HCT116 (cell line): ENCODE measurements at regions of chr16 and their contacts with region 1.

Region 1: GRCh38 chr16:15822957-15823356 is 33.9 kb downstream of the MYH11 start:
- DNase-seq: no peak
- ATAC-seq: no peak
- H3K4me3 ChIP-seq: no peak overlapping the region
- H3K27ac ChIP-seq: no peak overlapping the region
- H3K4me1 ChIP-seq: no peaks in the 10 kb centered on the region
- H3K27me3 ChIP-seq: no peaks in the 10 kb centered on the region
- CTCF ChIP-seq: no peak
- POLR2A ChIP-seq: no peak
- RAD21 ChIP-seq: no peak

Region 2: DNA sequence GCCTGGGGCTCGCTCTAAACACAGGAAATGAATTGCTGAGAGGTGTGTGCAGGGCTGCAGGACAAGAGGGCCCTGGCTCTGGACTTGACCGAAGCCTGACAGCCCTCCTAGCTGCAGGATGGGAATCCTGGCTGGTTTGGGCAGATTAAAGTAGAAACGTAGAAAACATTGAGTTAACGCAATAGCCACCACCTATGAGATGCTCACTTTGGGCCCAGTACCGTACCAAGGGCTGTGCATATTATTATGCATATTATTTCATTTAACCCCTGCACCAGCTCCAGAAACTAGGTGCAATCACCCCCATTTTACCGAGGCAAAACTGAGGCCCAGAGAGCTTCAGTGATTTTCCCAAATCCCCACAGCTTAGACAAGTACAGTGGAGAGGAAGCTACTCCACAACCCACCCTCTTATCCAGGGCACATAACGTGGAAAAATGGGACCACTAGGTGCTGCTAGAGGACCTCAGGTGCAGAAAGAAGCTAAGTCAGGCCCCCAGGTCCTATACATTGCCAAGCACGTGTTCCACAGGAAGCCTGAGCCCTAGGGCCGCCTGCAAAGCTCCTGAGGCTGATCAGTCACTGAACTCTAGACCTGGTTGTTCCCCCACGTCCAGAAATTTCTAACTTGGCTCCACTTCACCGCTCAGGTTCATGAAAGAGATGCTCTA is 45.3 kb before region 1 on chr16:
- CTCF ChIA-PET with region 1: interaction called, 38 read pairs
- POLR2A ChIA-PET with region 1: interaction called, 3 read pairs
- RAD21 ChIA-PET with region 1: interaction called in 1 of 2 experiments, 4 read pairs
- intact Hi-C with region 1: no loop called
- DNase-seq: peak; percentile 60
- ATAC-seq: peak; percentile 94
- H3K4me3 ChIP-seq: no peak overlapping the region
- H3K27ac ChIP-seq: no peak overlapping the region
- H3K4me1 ChIP-seq: no peaks in the 10 kb centered on the region; a peak in 1 of 4 replicates
- H3K27me3 ChIP-seq: no peaks in the 10 kb centered on the region
- CTCF ChIP-seq: peak; percentile 58 to 74 (median 65)
- POLR2A ChIP-seq: no peak
- RAD21 ChIP-seq: peak; percentile 88

Region 3: DNA sequence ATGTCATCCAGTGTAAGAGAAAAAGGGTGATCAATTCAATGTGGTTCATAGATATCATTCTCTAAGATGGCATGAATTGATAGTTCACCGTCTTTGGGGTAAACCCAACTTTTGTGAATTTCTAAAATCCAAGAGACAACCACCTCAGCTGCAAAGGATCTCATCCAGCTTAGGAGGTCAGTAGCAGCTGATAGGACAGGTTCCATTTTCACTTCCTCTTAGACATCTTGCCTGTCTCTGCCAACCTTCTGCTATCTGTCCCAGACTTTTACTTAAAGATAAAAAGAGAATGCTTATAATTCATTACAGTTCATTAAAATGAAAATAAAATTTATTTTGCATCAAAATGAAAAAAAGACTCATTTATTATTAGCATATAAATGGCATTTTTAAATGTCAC is 1179.6 kb after region 1 on chr16:
- CTCF ChIA-PET with region 1: no interaction called
- POLR2A ChIA-PET with region 1: no interaction called
- RAD21 ChIA-PET with region 1: no interaction called
- intact Hi-C with region 1: no loop called
- DNase-seq: no peak
- ATAC-seq: no peak
- H3K4me3 ChIP-seq: no peak overlapping the region
- H3K27ac ChIP-seq: no peak overlapping the region
- H3K4me1 ChIP-seq: no peaks in the 10 kb centered on the region
- H3K27me3 ChIP-seq: 0 out of 2 replicates have a peak, but pooled peaks cover 3% of the 10 kb centered on the region
- CTCF ChIP-seq: no peak
- POLR2A ChIP-seq: no peak
- RAD21 ChIP-seq: no peak